AG04450 (cell line): ENCODE measurements at regions of chr14 and their contacts with region 1.

Region 1: DNA sequence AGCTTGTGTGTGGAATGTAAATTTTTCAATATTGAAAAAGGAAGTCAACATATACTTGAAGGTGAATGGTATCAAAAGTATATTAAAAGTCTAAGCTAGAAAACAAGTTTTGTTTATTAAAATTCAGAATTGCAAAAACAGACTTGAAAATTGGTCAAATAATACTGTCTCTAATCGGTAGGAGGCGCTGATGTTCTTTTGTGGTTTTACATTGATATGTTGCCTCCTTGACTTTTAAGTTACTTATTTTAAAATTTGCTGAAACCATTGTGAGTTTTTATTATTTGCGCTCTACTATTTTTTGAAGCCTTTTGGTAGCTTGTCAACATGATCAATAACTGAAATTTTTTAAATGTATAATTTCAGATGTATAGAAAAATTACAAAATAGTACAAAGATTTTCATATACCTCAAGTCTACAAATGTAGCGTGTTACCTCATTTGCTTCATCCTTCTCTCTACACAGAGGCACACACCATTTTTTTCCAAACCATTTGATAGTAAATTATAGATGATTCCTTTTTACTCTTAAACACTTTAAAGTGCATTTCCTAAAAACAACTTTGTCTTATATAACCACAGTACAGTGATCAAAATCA is 6.9 kb downstream of the RTRAF start:
- DNase-seq: no peak
- H3K4me3 ChIP-seq: no peak overlapping the region
- H3K27ac ChIP-seq: no peak overlapping the region
- H3K27me3 ChIP-seq: no peaks in the 10 kb centered on the region
- CTCF ChIP-seq: peak; percentile 75

Region 2: GRCh38 chr14:51006781-51007211 is 989.5 kb before region 1 on chr14:
- CTCF ChIA-PET with region 1: no interaction called
- POLR2A ChIA-PET with region 1: no interaction called
- DNase-seq: peak; percentile 8
- H3K4me3 ChIP-seq: no peak overlapping the region
- H3K27ac ChIP-seq: no peak overlapping the region
- H3K27me3 ChIP-seq: no peaks in the 10 kb centered on the region
- CTCF ChIP-seq: no peak

Region 3: GRCh38 chr14:51901475-51902024 is 94.7 kb before region 1 on chr14:
- CTCF ChIA-PET with region 1: no interaction called
- POLR2A ChIA-PET with region 1: no interaction called
- DNase-seq: no peak
- H3K4me3 ChIP-seq: no peak overlapping the region
- H3K27ac ChIP-seq: no peak overlapping the region
- H3K27me3 ChIP-seq: no peaks in the 10 kb centered on the region
- CTCF ChIP-seq: no peak

Region 4: DNA sequence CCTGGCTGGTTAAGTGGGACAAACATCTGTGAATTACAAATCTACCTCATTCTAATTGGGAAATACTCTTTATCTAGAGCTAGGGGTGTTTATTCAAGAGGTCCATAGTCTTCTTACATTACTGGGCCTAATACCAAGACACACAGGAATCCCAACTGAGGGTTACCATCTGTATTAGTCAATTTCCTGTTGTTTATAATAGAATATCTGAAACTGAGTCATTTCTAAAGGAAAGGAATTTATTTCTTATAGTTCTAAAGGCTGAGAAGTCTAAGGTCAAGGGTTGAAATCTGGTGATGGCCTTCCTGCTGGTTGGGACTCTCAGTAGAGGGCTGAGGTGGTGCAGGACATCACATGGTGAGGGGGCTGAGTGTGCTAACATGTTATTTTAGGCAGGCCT is 29.1 kb after region 1 on chr14:
- CTCF ChIA-PET with region 1: interaction called, 10 read pairs
- POLR2A ChIA-PET with region 1: no interaction called
- DNase-seq: peak; percentile 78
- H3K4me3 ChIP-seq: no peak overlapping the region
- H3K27ac ChIP-seq: peak overlapping the region; percentile 58
- H3K27me3 ChIP-seq: no peaks in the 10 kb centered on the region
- CTCF ChIP-seq: no peak

Region 5: DNA sequence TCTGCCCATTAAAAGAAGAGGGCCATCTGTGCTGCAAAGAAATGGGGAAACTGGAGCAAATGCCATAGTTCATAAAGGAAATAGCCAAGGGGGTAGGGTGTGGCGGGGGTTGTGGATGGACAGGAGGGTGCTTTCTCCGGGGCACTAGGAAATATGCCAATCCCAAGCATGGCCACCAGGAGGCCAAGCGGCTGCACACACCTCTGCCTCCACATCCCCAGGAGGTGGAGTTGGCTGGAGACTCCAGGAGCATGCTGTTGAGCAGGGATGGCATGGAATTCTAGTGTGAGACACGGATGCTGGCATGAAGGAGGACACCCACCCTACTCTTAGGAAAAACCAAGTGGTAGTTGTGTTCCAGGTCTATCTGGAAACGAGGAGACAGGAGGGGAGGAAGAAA is 47.4 kb after region 1 on chr14:
- CTCF ChIA-PET with region 1: interaction called, 13 read pairs
- POLR2A ChIA-PET with region 1: no interaction called
- DNase-seq: no peak
- H3K4me3 ChIP-seq: no peak overlapping the region
- H3K27ac ChIP-seq: no peak overlapping the region
- H3K27me3 ChIP-seq: no peaks in the 10 kb centered on the region
- CTCF ChIP-seq: peak; percentile 61